ENCODE measurements at regions of chr15 and their contacts with region 1.

Region 1: GRCh38 chr15:99704444-99704838 is 28.8 kb downstream of the LYSMD4 start:
- DNase-seq: peak; percentile 56
- CTCF ChIP-seq: peak; percentile 60

Region 2: GRCh38 chr15:99275525-99276128 is 428.8 kb before region 1 on chr15:
- CTCF ChIA-PET with region 1: interaction called, 154 read pairs
- POLR2A ChIA-PET with region 1: no interaction called
- DNase-seq: no peak
- CTCF ChIP-seq: no peak

Region 3: DNA sequence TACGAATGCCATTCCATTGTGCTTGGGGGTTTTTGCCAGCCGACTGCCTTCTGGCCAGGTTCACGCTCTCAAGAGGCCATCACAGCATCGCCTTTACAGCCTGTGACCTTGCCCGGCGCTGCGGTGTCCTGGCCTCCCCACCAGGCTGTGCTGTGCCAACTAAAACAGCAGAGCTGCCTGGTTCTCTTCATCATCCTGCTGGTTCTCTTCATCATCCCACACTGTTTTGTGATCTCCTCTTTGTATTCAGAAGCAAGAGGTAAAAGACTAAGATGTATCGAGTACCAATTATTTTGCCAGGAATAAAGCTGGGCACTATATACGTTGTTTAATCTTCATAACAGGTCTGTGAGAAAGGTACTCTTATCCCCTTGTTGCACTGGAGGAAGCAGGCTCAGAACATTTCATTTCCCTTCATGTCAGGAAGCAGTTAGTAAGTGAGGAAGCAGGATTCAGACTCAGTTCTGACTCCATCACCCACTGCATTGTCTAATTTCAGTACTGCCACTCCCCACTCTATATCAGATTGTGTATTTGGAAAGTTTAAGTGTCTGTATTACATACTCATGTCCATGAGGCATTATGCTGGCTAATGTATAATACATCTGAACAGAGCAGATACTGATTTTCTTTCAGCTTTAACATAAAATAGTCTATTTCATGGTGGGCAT is 360.4 kb before region 1 on chr15:
- CTCF ChIA-PET with region 1: interaction called, 17 read pairs
- POLR2A ChIA-PET with region 1: no interaction called
- DNase-seq: no peak
- CTCF ChIP-seq: no peak

Region 4: GRCh38 chr15:99447497-99448371 is 256.7 kb before region 1 on chr15:
- CTCF ChIA-PET with region 1: interaction called, 10 read pairs
- POLR2A ChIA-PET with region 1: no interaction called
- DNase-seq: peak; percentile 37
- CTCF ChIP-seq: no peak

Region 5: DNA sequence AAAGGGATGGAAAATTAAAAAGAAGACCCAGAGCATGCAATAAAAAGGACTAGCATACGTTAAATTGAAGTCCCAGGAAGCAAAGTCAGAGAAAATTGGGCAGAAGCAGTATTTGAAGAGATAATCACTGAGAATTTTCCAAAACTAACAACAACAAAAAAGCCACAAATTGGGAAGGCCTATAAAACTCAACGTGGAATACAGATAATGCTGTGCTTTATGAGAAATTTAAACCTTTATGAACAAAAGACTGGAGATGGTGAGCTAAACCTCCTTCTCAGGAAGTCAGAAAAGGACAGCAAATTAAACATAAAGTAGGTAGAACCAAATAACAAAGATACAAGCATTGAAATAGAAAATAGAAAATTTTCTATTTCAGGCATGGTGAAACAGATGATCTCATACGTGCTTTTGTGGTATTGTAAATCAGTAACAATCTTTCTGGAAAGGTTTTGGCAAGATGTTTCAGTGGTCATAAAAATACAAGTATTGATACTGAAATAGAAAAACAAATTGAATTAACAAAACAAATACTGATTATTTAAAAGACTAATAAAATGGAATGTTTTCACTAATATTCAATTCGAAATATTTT is 26.8 kb before region 1 on chr15:
- CTCF ChIA-PET with region 1: interaction called, 10 read pairs
- POLR2A ChIA-PET with region 1: no interaction called
- DNase-seq: peak; percentile 36
- CTCF ChIP-seq: no peak

Region 6: DNA sequence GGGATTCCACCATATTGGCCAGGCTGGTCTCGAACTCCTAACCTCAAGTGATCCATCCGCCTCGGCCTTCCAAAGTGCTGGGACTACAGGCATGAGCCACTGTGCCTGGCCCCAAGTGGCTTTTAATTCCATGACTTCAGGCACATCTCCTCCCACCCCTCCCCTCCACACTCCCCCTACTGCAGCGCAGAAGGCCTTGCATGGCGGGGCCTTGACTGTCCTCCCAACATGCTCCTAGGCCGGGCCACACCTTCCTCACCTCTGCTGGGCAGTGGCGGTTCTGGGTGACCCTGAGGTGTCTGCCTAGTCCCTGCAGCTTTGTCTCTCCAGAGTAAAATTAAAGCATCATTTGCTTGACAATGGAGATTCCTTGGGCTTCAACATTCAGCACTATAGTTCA is 21.9 kb after region 1 on chr15:
- CTCF ChIA-PET with region 1: interaction called, 18 read pairs
- POLR2A ChIA-PET with region 1: no interaction called
- DNase-seq: no peak
- CTCF ChIP-seq: no peak

Region 7: DNA sequence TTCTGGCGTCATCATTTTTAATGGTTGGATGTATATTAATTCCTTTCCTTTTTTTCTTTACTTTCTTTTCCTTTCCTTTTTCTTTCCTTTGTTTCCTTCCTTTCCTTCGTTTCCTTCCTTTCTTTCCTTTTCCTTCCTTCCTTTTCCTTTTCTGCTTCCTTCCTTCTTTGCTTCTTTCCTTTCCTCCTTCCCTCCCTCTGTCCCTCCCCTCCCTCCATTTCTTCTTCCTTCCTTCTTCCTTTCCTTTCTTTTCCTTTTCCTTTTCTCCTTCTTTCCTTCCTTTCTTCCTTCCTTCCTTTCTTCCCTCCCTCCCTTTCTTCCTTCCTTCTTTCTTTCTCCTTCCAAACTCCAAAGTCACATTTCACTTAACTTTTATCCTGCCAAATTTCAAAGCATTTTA is 83.7 kb after region 1 on chr15:
- CTCF ChIA-PET with region 1: no interaction called
- POLR2A ChIA-PET with region 1: no interaction called
- DNase-seq: no peak
- CTCF ChIP-seq: no peak